ENCODE measurements at regions of chr9 and their contacts with region 1.

Region 1: DNA sequence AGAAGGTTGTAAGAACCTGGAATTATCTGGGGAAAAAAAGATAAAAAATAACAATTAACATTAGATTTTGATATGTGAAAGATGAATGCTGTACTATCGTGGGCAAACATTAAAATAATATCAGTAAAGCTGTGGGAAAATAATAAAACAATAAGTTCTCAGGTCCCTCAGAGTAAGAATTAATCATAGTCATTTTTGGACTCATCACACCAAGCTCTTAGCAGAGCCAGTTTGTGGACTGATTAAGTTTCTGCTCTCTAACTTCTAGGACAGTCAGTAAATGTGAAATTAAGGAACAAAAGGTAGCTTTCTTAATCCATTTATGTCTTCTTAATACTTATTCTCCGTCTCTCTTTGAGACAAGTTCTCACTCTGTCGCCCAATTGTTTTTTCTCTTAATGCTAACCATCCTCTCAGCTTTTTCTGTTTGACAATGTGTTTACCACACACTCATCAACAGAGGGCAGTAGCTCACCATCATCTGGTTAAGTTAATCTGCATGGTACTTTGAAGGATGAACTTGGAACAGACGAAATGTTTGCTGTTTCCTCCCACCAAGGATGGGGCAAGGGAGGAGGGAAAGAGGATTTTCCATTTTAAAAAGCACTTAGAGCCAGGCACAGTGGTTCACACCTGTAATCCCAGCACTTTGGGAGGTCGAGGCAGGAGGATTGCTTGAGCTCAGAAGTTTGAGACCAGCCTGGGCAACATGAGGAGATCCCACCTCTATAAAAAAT is 5.3 kb upstream of the ACO1 start:
- DNase-seq: peak in 7 of 9 donors; percentile 49 to 78 (median 68)
- ATAC-seq: peak; percentile 90
- H3K4me3 ChIP-seq: no peak overlapping the region
- H3K4me3 Mint-ChIP-seq: peak overlapping the region in 4 of 10 donors; percentile 15 to 49 (median 36)
- H3K27ac ChIP-seq: no peak overlapping the region
- H3K27ac Mint-ChIP-seq: peak overlapping the region in 8 of 9 donors; percentile 1 to 83 (median 32)
- H3K4me1 ChIP-seq: peaks cover 5 to 13% of the 10 kb centered on the region in 2 donors
- H3K4me1 Mint-ChIP-seq: peaks cover 11 to 19% (median 16%) of the 10 kb centered on the region in 7 donors
- H3K27me3 ChIP-seq: no peaks in the 10 kb centered on the region
- H3K27me3 Mint-ChIP-seq: peaks cover 0 to 37% (median 9%) of the 10 kb centered on the region in 5 donors

Region 2: DNA sequence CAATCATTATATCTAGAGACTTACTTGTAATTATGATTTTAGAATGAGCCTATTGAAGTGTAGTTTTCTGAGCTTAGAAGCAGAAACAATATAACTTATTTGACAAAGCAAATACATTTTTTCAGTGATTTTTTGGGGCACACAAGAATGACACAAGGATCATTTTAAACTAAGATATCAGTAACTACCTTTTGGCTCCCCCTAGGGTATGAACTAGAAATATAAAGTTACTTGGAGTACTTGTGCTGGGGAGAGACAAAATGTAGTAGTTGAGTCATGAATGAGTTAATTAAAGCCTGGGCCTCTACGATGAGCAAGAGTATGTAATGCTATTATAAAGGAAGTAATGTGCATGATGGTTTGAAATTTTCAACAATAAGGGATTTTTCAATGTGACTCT is 1238.8 kb before region 1 on chr9:
- CTCF ChIA-PET with region 1: no interaction called
- POLR2A ChIA-PET with region 1: no interaction called
- intact Hi-C with region 1: no loop called
- DNase-seq: no peak
- ATAC-seq: no peak
- H3K4me3 ChIP-seq: no peak overlapping the region
- H3K4me3 Mint-ChIP-seq: no peak overlapping the region
- H3K27ac ChIP-seq: no peak overlapping the region
- H3K27ac Mint-ChIP-seq: no peak overlapping the region
- H3K4me1 ChIP-seq: no peaks in the 10 kb centered on the region
- H3K4me1 Mint-ChIP-seq: peaks cover 0 to 13% (median 0%) of the 10 kb centered on the region in 7 donors
- H3K27me3 ChIP-seq: no peaks in the 10 kb centered on the region
- H3K27me3 Mint-ChIP-seq: no peaks in the 10 kb centered on the region

Region 3: DNA sequence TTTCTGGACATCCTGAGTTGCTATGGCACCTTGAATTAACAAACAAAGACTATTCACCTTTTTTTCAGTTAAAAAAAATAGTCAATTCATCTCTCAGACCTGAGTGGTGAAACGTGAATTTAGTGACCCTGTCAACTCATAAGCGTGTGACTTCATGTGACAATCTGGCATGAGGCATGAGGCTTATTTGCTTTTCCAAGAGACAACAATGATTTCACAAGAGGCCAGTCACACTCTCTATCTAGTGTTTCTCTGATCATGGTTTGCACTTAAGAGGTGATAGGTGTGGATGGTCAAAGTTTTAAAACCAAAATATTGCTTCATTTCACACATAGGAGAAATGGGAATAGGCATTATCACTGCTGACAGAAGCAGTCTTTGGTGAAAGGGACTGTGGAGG is 554.3 kb before region 1 on chr9:
- CTCF ChIA-PET with region 1: no interaction called
- POLR2A ChIA-PET with region 1: no interaction called
- intact Hi-C with region 1: no loop called
- DNase-seq: no peak
- ATAC-seq: no peak
- H3K4me3 ChIP-seq: no peak overlapping the region
- H3K4me3 Mint-ChIP-seq: no peak overlapping the region
- H3K27ac ChIP-seq: no peak overlapping the region
- H3K27ac Mint-ChIP-seq: no peak overlapping the region
- H3K4me1 ChIP-seq: no peaks in the 10 kb centered on the region
- H3K4me1 Mint-ChIP-seq: no peaks in the 10 kb centered on the region
- H3K27me3 ChIP-seq: no peaks in the 10 kb centered on the region
- H3K27me3 Mint-ChIP-seq: no peaks in the 10 kb centered on the region

Region 4: GRCh38 chr9:32117276-32117675 is 261.9 kb before region 1 on chr9:
- CTCF ChIA-PET with region 1: no interaction called
- POLR2A ChIA-PET with region 1: no interaction called
- intact Hi-C with region 1: no loop called
- DNase-seq: no peak
- ATAC-seq: no peak
- H3K4me3 ChIP-seq: no peak overlapping the region
- H3K4me3 Mint-ChIP-seq: no peak overlapping the region
- H3K27ac ChIP-seq: no peak overlapping the region
- H3K27ac Mint-ChIP-seq: no peak overlapping the region
- H3K4me1 ChIP-seq: no peaks in the 10 kb centered on the region
- H3K4me1 Mint-ChIP-seq: no peaks in the 10 kb centered on the region
- H3K27me3 ChIP-seq: no peaks in the 10 kb centered on the region
- H3K27me3 Mint-ChIP-seq: peaks cover 0 to 6% (median 0%) of the 10 kb centered on the region in 5 donors

Region 5: GRCh38 chr9:32431940-32432555 is 52.9 kb after region 1 on chr9:
- CTCF ChIA-PET with region 1: interaction called, 45 read pairs
- POLR2A ChIA-PET with region 1: no interaction called
- intact Hi-C with region 1: loop called (anchors 1 to 2 kb)
- DNase-seq: peak; percentile 11 to 35 (median 22)
- ATAC-seq: peak; percentile 60
- H3K4me3 ChIP-seq: no peak overlapping the region
- H3K4me3 Mint-ChIP-seq: no peak overlapping the region
- H3K27ac ChIP-seq: no peak overlapping the region
- H3K27ac Mint-ChIP-seq: peak overlapping the region in 1 of 9 donors; percentile 71
- H3K4me1 ChIP-seq: no peaks in the 10 kb centered on the region
- H3K4me1 Mint-ChIP-seq: peaks cover 0 to 5% (median 0%) of the 10 kb centered on the region in 7 donors
- H3K27me3 ChIP-seq: no peaks in the 10 kb centered on the region
- H3K27me3 Mint-ChIP-seq: no peaks in the 10 kb centered on the region

Region 6: DNA sequence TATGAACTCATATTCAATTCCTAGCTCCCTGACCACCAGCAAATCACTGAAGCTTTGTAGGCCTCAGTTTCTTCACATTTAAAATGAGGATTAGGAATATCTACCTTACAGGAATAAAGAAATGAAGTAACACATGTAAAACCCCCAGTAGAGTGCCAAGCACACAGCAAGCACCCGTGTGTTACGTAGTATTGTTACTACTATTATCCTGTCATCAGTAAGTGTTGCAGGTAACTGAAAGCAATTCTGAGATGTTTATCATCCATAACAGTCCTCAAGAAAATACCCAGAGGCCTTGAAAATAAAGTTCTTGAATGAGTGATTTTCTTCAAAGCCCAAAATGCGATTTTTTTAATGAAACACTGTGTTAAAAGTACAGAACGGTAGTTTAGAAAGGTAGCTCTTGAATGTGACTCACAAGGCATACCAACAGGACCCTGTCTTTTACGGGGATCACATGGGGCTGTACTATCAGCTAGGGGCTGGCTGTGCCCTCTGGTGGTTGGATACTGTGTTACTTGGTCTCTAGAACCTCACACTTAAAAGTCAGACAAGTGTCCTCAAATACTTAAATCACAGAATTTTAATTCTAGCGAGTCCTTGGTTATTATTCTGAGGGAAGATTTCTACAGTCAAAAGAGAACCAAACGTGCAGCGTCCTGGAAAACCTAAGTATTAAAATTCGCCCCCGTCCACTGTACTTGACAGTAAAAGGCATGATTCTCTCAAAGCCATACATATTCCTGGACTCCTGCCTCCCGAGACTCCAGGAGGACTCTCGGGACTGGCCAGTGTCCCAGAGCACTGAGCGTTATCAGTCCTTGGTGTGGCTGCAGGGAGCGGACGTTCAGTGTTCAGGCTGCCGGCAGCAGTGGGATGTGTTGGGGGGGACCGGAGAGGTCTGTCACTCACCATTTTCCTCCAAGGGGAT is 193.1 kb after region 1 on chr9:
- CTCF ChIA-PET with region 1: interaction called, 261 read pairs
- POLR2A ChIA-PET with region 1: interaction called, 16 read pairs
- intact Hi-C with region 1: loop called (anchors 1 kb)
- DNase-seq: peak; percentile 33 to 85 (median 77)
- ATAC-seq: peak; percentile 92
- H3K4me3 ChIP-seq: peak overlapping the region; percentile 92
- H3K4me3 Mint-ChIP-seq: peak overlapping the region; percentile 98 to 100 (median 99)
- H3K27ac ChIP-seq: peak overlapping the region; percentile 86
- H3K27ac Mint-ChIP-seq: peak overlapping the region; percentile 93 to 99 (median 99)
- H3K4me1 ChIP-seq: peaks cover 14 to 22% of the 10 kb centered on the region in 2 donors
- H3K4me1 Mint-ChIP-seq: peaks cover 18 to 43% (median 30%) of the 10 kb centered on the region in 7 donors
- H3K27me3 ChIP-seq: no peaks in the 10 kb centered on the region
- H3K27me3 Mint-ChIP-seq: peaks cover 0 to 10% (median 0%) of the 10 kb centered on the region in 5 donors

Region 7: DNA sequence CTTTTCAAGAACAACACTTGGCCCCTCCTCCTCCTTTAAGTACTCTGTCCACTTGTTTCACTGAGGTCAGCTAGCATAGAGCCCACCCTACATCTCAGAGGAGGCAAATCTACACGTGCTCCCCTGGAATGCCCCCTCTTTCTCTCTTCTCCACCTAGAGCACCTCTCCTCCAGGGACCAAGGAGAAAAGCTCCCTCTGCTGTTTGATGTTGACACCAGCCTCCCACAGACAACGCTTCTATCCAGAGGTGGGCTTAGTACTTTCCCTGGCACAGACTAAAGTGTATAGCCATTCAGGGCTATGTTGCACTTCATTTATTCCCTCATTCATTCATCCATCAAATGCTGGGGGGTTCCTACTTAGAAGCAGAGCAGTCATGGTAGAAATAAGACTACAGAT is 324.5 kb after region 1 on chr9:
- CTCF ChIA-PET with region 1: no interaction called
- POLR2A ChIA-PET with region 1: no interaction called
- intact Hi-C with region 1: loop called in 1 of 2 experiments (anchors 5 kb)
- DNase-seq: no peak
- ATAC-seq: no peak
- H3K4me3 ChIP-seq: no peak overlapping the region
- H3K4me3 Mint-ChIP-seq: no peak overlapping the region
- H3K27ac ChIP-seq: no peak overlapping the region
- H3K27ac Mint-ChIP-seq: no peak overlapping the region
- H3K4me1 ChIP-seq: no peaks in the 10 kb centered on the region
- H3K4me1 Mint-ChIP-seq: no peaks in the 10 kb centered on the region
- H3K27me3 ChIP-seq: no peaks in the 10 kb centered on the region
- H3K27me3 Mint-ChIP-seq: peaks cover 0 to 45% (median 17%) of the 10 kb centered on the region in 5 donors